ENCODE measurements at regions of chr7 and their contacts with region 1.

Region 1: GRCh38 chr7:107309296-107309695 is 140.5 kb downstream of the HBP1 start:
- DNase-seq: no peak
- ATAC-seq: no peak
- H3K4me3 ChIP-seq: no peak overlapping the region
- H3K4me3 Mint-ChIP-seq: no peak overlapping the region
- H3K27ac ChIP-seq: no peak overlapping the region
- H3K27ac Mint-ChIP-seq: no peak overlapping the region
- H3K4me1 ChIP-seq: no peaks in the 10 kb centered on the region
- H3K4me1 Mint-ChIP-seq: peaks cover 0 to 19% (median 0%) of the 10 kb centered on the region in 7 donors
- H3K27me3 ChIP-seq: no peaks in the 10 kb centered on the region
- H3K27me3 Mint-ChIP-seq: no peaks in the 10 kb centered on the region

Region 2: DNA sequence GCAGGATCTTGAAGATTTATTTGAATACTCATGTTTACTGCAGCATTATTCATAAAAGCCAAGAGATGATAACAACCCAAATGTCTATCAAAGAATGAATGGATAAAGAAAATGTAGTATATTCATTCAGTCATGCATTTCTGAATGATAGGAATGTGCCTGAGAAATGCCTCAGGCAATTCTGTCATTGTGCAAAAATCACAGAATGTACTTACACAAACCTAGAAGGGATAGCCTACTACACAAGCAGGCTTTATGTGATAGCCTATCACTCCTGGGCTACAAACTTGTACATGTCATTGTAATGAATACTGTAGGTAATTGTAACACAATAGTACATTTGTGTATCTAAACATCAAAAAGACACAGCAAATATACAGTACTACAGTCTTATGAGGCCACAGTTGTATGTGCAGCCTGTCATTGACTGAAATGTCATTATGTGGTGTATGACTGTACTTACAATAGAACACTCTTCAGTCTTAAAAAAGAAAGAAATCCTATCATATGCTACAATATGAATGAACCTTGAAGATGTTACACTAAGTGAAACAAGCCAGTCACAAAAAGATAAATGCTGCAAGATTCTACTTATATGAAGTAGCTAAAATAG is 18.8 kb after region 1 on chr7:
- CTCF ChIA-PET with region 1: no interaction called
- POLR2A ChIA-PET with region 1: no interaction called
- intact Hi-C with region 1: loop called in 1 of 2 experiments (anchors 2 kb)
- DNase-seq: no peak
- ATAC-seq: no peak
- H3K4me3 ChIP-seq: no peak overlapping the region
- H3K4me3 Mint-ChIP-seq: no peak overlapping the region
- H3K27ac ChIP-seq: no peak overlapping the region
- H3K27ac Mint-ChIP-seq: no peak overlapping the region
- H3K4me1 ChIP-seq: peaks cover 0 to 3% of the 10 kb centered on the region in 2 donors
- H3K4me1 Mint-ChIP-seq: peaks cover 6 to 20% (median 15%) of the 10 kb centered on the region in 7 donors
- H3K27me3 ChIP-seq: no peaks in the 10 kb centered on the region
- H3K27me3 Mint-ChIP-seq: no peaks in the 10 kb centered on the region

Measured in naive thymus-derived CD4-positive, alpha-beta T cell (primary cell).